ENCODE measurements at regions of chr5 and their contacts with region 1.

Region 1: GRCh38 chr5:34533582-34534522 is 122.3 kb upstream of the RAI14 start:
- DNase-seq: peak; percentile 97
- ATAC-seq: peak; percentile 61
- H3K4me3 ChIP-seq: no peak overlapping the region
- H3K27ac ChIP-seq: peak overlapping the region; percentile 98
- H3K4me1 ChIP-seq: peaks cover 36% of the 10 kb centered on the region
- H3K27me3 ChIP-seq: no peaks in the 10 kb centered on the region
- CTCF ChIP-seq: no peak
- POLR2A ChIP-seq: no peak
- RAD21 ChIP-seq: no peak

Region 2: DNA sequence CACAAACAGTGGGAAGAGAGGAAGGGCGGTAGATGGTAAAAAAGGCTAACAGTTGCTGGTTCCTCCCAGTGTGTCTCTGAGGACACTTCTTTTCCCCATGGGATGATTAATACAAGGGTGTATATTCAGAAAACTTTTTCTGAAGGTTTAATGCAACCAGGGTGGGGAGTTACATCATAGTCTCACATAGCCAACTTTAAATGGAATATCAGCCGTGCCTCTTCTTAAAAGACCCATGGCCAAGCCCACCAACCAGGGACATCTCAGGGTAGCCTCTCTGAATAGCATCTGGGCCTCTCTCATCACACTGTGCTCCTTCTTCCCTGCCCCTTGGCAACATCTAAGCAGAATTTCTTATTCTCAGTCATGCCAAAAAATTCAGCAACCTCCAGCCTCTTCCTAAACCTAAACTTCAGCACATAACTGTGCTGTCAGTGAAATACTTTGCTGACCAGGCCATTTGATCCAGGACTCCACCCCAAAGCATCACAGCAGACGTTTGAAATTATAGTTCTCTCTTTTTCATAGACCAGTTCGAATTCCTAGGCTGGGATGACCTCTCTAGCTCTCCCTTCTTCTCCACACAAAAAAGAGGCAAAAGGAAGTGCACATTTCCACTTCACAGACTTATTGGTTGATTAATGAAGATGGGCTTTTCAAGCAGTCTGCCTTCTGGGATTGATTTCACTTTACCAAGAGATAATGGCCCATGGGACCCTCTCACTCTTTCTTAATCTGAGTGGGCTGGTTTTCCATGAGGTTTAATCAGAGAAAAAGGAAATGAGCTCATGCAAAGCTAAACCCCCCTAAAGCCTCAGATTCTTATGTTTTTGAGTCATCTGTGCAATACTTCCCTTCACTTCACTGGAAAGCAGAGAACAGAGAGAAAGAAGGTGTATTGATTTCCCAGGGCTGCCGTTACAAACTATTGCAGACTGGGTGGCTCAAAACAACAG is 37.1 kb after region 1 on chr5:
- CTCF ChIA-PET with region 1: interaction called, 3 read pairs
- POLR2A ChIA-PET with region 1: no interaction called
- dilution Hi-C with region 1: no loop called
- in situ Hi-C with region 1: no loop called
- intact Hi-C with region 1: loop called (anchors 2 kb)
- DNase-seq: peak; percentile 87
- ATAC-seq: peak; percentile 84
- H3K4me3 ChIP-seq: no peak overlapping the region
- H3K27ac ChIP-seq: peak overlapping the region; percentile 95
- H3K4me1 ChIP-seq: peaks cover 24% of the 10 kb centered on the region
- H3K27me3 ChIP-seq: no peaks in the 10 kb centered on the region
- CTCF ChIP-seq: no peak
- POLR2A ChIP-seq: no peak; the same call in 1 of the 2 replicates
- RAD21 ChIP-seq: no peak

Region 3: DNA sequence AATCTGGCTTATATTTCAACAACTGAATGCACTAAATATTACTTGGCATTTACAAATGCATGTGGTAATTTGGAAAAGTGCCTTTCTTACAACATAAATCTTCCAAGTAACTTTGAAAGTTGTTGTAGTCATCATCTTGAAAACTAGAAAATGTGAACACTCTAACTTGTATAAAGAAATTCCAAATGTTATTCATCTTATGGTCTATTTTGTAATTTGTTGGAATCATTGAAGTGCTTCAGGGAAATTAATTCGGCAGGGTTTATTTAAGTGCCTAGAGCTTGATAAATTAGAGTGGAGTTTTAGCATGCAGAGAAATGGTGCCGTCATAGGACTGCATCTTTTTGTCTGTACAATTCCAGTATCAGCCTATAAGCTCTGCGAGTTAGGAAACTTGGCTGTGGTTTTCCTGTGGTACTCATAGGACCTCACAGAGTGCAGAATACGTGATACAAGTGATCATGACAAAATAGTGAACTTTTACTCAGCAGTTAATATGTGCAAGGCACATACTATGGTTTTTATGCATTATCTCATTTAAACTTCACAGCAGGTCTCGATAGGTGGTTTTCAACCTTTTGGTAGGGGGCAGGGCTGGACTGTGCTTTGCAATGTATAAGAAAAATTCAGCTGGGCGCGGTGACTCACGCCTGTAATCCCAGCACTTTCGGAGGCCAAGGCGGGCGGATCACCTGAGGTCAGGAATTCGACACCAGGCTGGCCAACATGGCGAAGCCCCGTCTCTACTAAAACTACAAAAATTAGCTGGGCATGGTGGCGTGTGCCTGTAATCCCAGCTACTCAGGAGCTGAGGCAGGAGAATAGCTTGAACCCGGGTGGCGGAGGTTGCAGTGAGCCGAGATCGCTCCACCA is 201.9 kb after region 1 on chr5:
- CTCF ChIA-PET with region 1: no interaction called
- POLR2A ChIA-PET with region 1: no interaction called
- dilution Hi-C with region 1: no loop called
- in situ Hi-C with region 1: no loop called
- intact Hi-C with region 1: no loop called
- DNase-seq: peak; percentile 80
- ATAC-seq: peak; percentile 33
- H3K4me3 ChIP-seq: no peak overlapping the region
- H3K27ac ChIP-seq: peak overlapping the region; percentile 5; the same call in 1 of the 2 replicates
- H3K4me1 ChIP-seq: peaks cover 34% of the 10 kb centered on the region
- H3K27me3 ChIP-seq: no peaks in the 10 kb centered on the region
- CTCF ChIP-seq: no peak
- POLR2A ChIP-seq: no peak
- RAD21 ChIP-seq: no peak

Region 4: GRCh38 chr5:34811706-34812105 is 277.9 kb after region 1 on chr5:
- CTCF ChIA-PET with region 1: no interaction called
- POLR2A ChIA-PET with region 1: no interaction called
- dilution Hi-C with region 1: no loop called
- in situ Hi-C with region 1: no loop called
- intact Hi-C with region 1: loop called (anchors 5 kb)
- DNase-seq: no peak
- ATAC-seq: no peak
- H3K4me3 ChIP-seq: no peak overlapping the region
- H3K27ac ChIP-seq: no peak overlapping the region
- H3K4me1 ChIP-seq: no peaks in the 10 kb centered on the region
- H3K27me3 ChIP-seq: no peaks in the 10 kb centered on the region
- CTCF ChIP-seq: no peak
- POLR2A ChIP-seq: no peak
- RAD21 ChIP-seq: no peak